Cardiac septum (tissue), 1 donor: ENCODE measurements at regions of chr10 and their contacts with region 1.

Region 1: DNA sequence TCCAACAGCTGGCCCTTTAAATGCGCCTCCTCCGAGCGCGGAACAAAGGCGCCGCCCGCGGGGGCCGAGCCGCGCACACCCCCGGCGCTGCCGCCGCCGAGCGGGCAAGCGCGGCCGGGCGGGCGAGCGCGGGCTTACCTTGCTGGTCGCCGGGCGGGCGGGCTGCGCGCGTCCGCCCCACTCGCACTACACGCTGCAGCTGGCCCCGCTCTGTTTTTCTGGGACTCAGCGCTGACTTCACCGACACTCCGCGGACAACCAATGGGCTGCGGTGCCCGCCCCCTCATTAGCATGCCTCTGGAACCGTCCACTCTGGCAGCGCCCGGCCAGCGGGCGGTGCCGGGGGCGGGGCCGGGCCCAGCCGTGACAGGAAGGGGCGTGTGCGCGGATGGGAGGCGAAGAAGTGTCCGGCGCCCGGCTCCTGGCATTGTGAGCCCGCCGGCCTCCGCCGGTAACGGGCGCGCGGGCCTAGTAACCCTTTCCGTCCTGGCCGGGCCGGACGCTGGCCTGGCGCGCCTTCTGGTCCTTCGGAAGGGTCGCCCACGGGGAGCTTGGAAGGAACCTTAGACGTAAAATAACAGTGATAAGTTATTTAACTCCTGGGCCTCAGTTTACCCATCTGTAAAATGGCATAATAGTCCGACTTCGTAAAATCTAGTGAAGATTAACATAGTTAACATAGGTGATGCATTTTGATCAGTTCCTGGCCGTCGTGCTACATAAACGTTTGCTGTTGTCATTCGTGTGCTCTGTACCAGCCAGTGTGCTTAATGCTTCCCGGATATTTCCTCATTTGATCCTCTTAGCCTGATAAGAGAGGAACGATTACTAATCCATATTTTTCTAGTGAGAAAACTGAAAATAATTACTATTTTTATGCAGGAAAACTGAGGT is at the start of gene SORBS1:
- DNase-seq: peak; percentile 98
- total RNA-seq, gene SORBS1: 1,045 TPM

Region 2: DNA sequence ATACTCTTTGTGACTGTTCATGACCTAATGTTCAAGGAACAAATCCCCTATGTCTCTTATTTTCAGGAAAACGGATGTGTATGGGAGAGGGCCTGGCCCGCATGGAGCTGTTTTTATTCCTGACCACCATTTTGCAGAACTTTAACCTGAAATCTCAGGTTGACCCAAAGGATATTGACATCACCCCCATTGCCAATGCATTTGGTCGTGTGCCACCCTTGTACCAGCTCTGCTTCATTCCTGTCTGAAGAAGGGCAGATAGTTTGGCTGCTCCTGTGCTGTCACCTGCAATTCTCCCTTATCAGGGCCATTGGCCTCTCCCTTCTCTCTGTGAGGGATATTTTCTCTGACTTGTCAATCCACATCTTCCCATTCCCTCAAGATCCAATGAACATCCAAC is 826.2 kb before region 1 on chr10:
- intact Hi-C with region 1: no loop called
- DNase-seq: no peak

Region 3: GRCh38 chr10:95445837-95446486 is 115.5 kb before region 1 on chr10:
- intact Hi-C with region 1: loop called (anchors 2 kb)
- DNase-seq: no peak

Region 4: GRCh38 chr10:95480102-95480900 is 81.1 kb before region 1 on chr10:
- intact Hi-C with region 1: loop called (anchors 2 kb)
- DNase-seq: no peak

Region 5: GRCh38 chr10:95513941-95514392 is 47.5 kb before region 1 on chr10:
- intact Hi-C with region 1: loop called (anchors 2 kb)
- DNase-seq: no peak

Region 6: DNA sequence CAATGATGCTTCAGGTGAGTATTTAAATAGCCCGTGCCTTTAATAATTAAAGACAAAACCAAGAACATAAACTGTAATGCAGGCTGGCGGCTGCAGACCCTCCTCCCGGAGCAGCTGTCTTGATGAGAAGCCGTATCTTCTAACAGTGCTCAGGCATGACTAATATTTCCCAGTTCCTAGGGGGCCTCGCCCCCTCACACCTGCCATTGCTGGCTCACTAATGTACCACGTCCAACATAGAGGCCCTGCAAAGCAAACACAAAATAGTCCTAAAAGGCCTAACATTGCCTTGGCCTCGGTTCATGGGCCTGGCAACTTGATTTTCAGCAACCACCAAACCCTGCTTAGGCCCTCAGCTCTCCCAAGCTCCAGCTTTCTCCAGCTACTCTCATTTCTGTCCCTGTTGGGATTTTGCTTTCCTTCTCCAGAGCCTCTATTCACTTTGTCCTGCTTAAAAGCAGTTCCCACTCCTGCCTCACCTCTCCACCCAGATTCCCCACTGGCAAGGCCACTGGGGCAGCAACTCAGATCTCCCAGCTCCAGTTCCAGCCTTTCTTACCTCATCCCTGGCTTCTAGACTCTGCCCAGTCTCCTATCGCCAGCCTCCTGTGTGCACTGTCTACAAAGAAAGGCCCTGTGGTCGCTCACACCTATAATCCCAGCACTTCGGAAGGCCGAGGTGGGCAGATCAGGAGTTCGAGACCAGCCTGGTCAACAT is 16.5 kb before region 1 on chr10:
- intact Hi-C with region 1: loop called (anchors 2 kb)
- DNase-seq: no peak

Region 7: DNA sequence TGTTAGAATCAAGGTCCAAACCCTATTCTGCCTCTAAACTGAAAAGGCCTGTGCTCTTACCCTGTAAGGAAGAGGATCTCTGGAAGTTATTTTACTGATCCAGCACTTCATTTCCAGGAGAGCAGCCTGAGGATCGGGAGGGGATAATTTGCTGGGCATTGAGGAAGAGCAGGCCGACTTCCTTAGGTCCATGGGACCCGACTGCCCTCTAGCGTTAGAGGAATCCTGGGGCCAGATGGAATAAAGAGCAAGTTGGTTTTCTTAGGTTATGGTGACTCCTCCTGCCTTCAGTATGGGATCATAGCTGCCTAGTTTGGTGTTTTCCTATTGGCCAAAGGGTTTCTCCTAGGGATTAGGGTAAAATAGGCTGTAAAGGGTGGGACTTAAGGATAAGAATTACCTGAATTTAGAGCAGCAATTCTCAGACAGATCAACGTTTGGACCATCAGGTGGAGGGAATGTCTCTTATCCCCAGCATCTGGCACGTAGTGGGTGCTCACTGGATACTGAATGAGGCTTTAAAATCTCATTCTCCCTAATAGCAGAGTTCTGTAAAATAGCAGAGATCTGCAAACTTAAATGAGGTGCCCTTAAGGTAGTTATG is 39.8 kb after region 1 on chr10:
- intact Hi-C with region 1: loop called (anchors 5 kb)
- DNase-seq: peak; percentile 86

Region 8: GRCh38 chr10:95745501-95745900 is 184.1 kb after region 1 on chr10:
- intact Hi-C with region 1: no loop called
- DNase-seq: no peak